Aorta (tissue), 5 donors: ENCODE measurements at regions of chr3 and their contacts with region 1.

Region 1: GRCh38 chr3:180802837-180803236 is 109.6 kb upstream of the FXR1 start:
- DNase-seq: no peak
- ATAC-seq: no peak
- H3K4me3 ChIP-seq: no peak overlapping the region
- H3K27ac ChIP-seq: no peak overlapping the region
- H3K4me1 ChIP-seq: no peaks in the 10 kb centered on the region
- H3K27me3 ChIP-seq: no peaks in the 10 kb centered on the region

Region 2: GRCh38 chr3:180947761-180948633 is 145.2 kb after region 1 on chr3:
- intact Hi-C with region 1: loop called in 1 of 2 experiments (anchors 10 kb)
- DNase-seq: no peak
- ATAC-seq: no peak
- H3K4me3 ChIP-seq: no peak overlapping the region
- H3K27ac ChIP-seq: no peak overlapping the region
- H3K4me1 ChIP-seq: no peaks in the 10 kb centered on the region
- H3K27me3 ChIP-seq: no peaks in the 10 kb centered on the region

Region 3: GRCh38 chr3:181174834-181175233 is 372.0 kb after region 1 on chr3:
- intact Hi-C with region 1: loop called in 1 of 2 experiments (anchors 5 kb)
- DNase-seq: no peak
- ATAC-seq: no peak
- H3K4me3 ChIP-seq: no peak overlapping the region
- H3K27ac ChIP-seq: no peak overlapping the region
- H3K4me1 ChIP-seq: no peaks in the 10 kb centered on the region
- H3K27me3 ChIP-seq: no peaks in the 10 kb centered on the region

Region 4: DNA sequence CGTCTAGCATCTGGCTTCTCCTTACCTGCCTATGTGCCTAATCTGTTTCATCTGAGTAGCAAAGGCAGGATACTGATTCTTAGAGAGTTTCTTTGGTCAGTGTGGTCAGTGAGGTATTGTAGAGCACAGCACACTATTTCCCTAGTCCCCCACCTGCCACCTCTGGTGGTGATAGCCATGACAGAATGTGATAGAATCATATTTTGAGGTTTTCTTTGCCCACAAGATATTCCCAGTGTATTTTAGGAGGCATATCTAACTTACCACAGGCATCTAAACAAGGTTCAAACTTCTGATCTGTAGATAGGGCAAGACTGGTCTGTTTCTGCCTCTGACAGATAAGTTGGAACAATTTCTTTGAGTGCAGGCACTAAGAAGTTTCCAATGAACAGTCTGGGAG is 1096.9 kb after region 1 on chr3:
- intact Hi-C with region 1: no loop called
- DNase-seq: no peak
- ATAC-seq: no peak
- H3K4me3 ChIP-seq: no peak overlapping the region
- H3K27ac ChIP-seq: no peak overlapping the region
- H3K4me1 ChIP-seq: no peaks in the 10 kb centered on the region
- H3K27me3 ChIP-seq: peaks cover 0 to 3% of the 10 kb centered on the region in 2 donors